GM12878 (cell line): ENCODE measurements at regions of chr1 and their contacts with region 1.

Region 1: DNA sequence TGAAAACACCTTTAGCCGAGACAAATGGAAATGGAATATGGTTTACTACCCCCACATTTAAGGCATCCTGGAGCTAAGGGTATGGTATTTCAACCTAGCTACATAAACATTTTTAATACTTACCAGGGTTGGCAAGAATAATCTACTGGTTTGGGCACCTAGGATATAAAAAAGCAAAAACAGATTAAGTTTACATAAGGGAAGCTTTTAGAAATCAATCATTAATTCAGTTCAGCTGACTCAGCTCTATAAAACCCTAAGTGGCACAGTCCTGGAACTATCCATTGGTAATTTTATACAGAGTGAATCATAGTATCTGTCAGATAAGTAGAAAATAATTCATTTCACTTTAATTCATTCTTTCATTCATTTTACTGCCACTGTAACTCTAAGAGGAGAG is 355.2 kb downstream of the VAV3 start:
- DNase-seq: no peak
- ATAC-seq: no peak
- H3K4me3 ChIP-seq: no peak overlapping the region
- H3K27ac ChIP-seq: no peak overlapping the region
- H3K4me1 ChIP-seq: no peaks in the 10 kb centered on the region
- H3K27me3 ChIP-seq: no peaks in the 10 kb centered on the region
- CTCF ChIP-seq: no peak
- EP300 ChIP-seq: no peak
- POLR2A ChIP-seq: no peak
- RAD21 ChIP-seq: no peak

Region 2: GRCh38 chr1:105997516-105997915 is 1612.3 kb before region 1 on chr1:
- CTCF ChIA-PET with region 1: no interaction called
- POLR2A ChIA-PET with region 1: interaction called, 11 read pairs
- RAD21 ChIA-PET with region 1: no interaction called
- SMC1A ChIA-PET with region 1: no interaction called
- in situ Hi-C with region 1: no loop called
- intact Hi-C with region 1: no loop called
- DNase-seq: no peak
- ATAC-seq: no peak
- H3K4me3 ChIP-seq: no peak overlapping the region
- H3K27ac ChIP-seq: no peak overlapping the region
- H3K4me1 ChIP-seq: no peaks in the 10 kb centered on the region
- H3K27me3 ChIP-seq: no peaks in the 10 kb centered on the region
- CTCF ChIP-seq: no peak
- EP300 ChIP-seq: no peak
- POLR2A ChIP-seq: no peak
- RAD21 ChIP-seq: no peak

Region 3: DNA sequence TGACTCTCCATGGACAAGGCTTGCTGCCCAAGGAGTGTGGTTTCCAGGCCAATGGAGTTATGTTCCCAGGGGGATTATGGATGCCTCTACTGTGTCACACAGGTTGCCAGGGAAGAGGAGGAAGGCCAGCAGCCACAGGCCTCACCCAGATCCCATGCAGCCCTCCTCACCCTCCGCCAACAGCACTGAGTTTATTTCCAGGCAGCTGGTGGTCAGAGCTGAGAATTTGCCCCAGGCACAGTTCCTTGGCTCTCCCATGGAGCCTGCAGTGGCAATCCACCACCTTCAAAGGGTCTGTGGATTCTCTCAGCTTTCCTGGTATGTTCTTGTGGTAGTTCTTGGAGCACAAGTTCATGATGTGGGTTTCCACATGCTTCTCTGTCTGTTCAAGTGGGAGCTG is 389.8 kb before region 1 on chr1:
- CTCF ChIA-PET with region 1: no interaction called
- POLR2A ChIA-PET with region 1: interaction called, 12 read pairs
- RAD21 ChIA-PET with region 1: no interaction called
- SMC1A ChIA-PET with region 1: no interaction called
- in situ Hi-C with region 1: no loop called
- intact Hi-C with region 1: no loop called
- DNase-seq: no peak
- ATAC-seq: no peak
- H3K4me3 ChIP-seq: no peak overlapping the region
- H3K27ac ChIP-seq: no peak overlapping the region
- H3K4me1 ChIP-seq: no peaks in the 10 kb centered on the region
- H3K27me3 ChIP-seq: no peaks in the 10 kb centered on the region
- CTCF ChIP-seq: no peak
- EP300 ChIP-seq: no peak
- POLR2A ChIP-seq: no peak
- RAD21 ChIP-seq: no peak

Region 4: DNA sequence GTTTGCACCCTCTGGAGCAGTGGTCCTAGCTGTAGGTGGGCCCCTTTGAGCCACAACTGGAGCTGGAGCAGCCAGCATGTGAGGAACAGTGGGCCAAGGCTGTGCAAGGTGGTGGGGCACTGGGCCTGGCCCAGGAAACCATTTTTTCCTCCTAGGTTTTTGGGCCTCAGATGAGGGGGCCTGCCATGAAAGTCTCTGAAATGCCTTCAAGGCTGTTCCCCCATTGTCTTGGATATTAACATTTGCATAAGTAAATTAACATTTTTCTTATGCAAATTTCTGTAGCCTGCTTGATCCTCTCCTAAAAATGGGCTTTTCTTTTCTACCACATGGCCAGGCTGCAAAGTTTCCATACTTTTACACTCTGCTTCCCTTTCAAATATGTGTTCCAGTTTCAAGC is 257.0 kb before region 1 on chr1:
- CTCF ChIA-PET with region 1: no interaction called
- POLR2A ChIA-PET with region 1: no interaction called
- RAD21 ChIA-PET with region 1: no interaction called
- SMC1A ChIA-PET with region 1: no interaction called
- in situ Hi-C with region 1: no loop called
- intact Hi-C with region 1: no loop called
- DNase-seq: no peak
- ATAC-seq: no peak
- H3K4me3 ChIP-seq: no peak overlapping the region
- H3K27ac ChIP-seq: no peak overlapping the region
- H3K4me1 ChIP-seq: no peaks in the 10 kb centered on the region
- H3K27me3 ChIP-seq: no peaks in the 10 kb centered on the region
- CTCF ChIP-seq: no peak
- EP300 ChIP-seq: no peak
- POLR2A ChIP-seq: no peak
- RAD21 ChIP-seq: no peak